Caco-2 (cell line): ENCODE measurements at regions of chr2 and their contacts with region 1.

Region 1: GRCh38 chr2:17470855-17471641 is 47.2 kb downstream of the RAD51AP2 start:
- DNase-seq: peak in 1 of 2 experiments; percentile 20
- H3K4me3 ChIP-seq: no peak overlapping the region
- H3K4me3 Mint-ChIP-seq: no peak overlapping the region
- H3K27ac Mint-ChIP-seq: no peak overlapping the region
- H3K4me1 ChIP-seq: no peaks in the 10 kb centered on the region
- H3K4me1 Mint-ChIP-seq: no peaks in the 10 kb centered on the region
- H3K27me3 ChIP-seq: no peaks in the 10 kb centered on the region
- H3K27me3 Mint-ChIP-seq: no peaks in the 10 kb centered on the region
- CTCF ChIP-seq: peak; percentile 33 to 57

Region 2: DNA sequence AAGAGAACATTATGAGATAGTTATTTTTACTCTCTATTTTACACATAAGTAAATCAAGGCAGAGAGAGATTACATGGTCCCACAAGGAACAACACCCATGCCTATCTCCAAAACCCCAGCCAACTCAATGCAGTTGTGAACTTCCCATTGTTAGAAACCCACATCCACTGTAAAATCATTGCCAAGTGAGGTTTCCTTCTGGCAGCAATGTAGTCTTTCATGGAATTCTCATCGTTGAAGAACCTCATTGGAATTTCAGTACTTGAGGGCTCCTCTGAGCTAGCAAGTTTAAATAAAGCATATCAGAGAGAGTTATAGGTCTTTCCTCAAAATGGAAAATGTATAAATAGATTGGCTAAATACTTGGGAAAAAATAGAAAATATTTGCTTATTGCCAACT is 58.0 kb before region 1 on chr2:
- CTCF ChIA-PET with region 1: no interaction called
- POLR2A ChIA-PET with region 1: no interaction called
- intact Hi-C with region 1: no loop called
- DNase-seq: no peak
- H3K4me3 ChIP-seq: no peak overlapping the region
- H3K4me3 Mint-ChIP-seq: no peak overlapping the region
- H3K27ac Mint-ChIP-seq: no peak overlapping the region
- H3K4me1 ChIP-seq: no peaks in the 10 kb centered on the region
- H3K4me1 Mint-ChIP-seq: no peaks in the 10 kb centered on the region
- H3K27me3 ChIP-seq: no peaks in the 10 kb centered on the region
- H3K27me3 Mint-ChIP-seq: peaks cover 6% of the 10 kb centered on the region
- CTCF ChIP-seq: no peak

Region 3: GRCh38 chr2:17557596-17557995 is 86.5 kb after region 1 on chr2:
- CTCF ChIA-PET with region 1: no interaction called
- POLR2A ChIA-PET with region 1: no interaction called
- intact Hi-C with region 1: loop called (anchors 1 kb)
- DNase-seq: no peak
- H3K4me3 ChIP-seq: no peak overlapping the region
- H3K4me3 Mint-ChIP-seq: no peak overlapping the region
- H3K27ac Mint-ChIP-seq: no peak overlapping the region
- H3K4me1 ChIP-seq: no peaks in the 10 kb centered on the region
- H3K4me1 Mint-ChIP-seq: no peaks in the 10 kb centered on the region
- H3K27me3 ChIP-seq: no peaks in the 10 kb centered on the region
- H3K27me3 Mint-ChIP-seq: no peaks in the 10 kb centered on the region
- CTCF ChIP-seq: no peak

Region 4: GRCh38 chr2:17573085-17573803 is 102.2 kb after region 1 on chr2:
- CTCF ChIA-PET with region 1: no interaction called
- POLR2A ChIA-PET with region 1: no interaction called
- intact Hi-C with region 1: loop called (anchors 1 kb)
- DNase-seq: no peak
- H3K4me3 ChIP-seq: no peak overlapping the region
- H3K4me3 Mint-ChIP-seq: no peak overlapping the region
- H3K27ac Mint-ChIP-seq: no peak overlapping the region
- H3K4me1 ChIP-seq: no peaks in the 10 kb centered on the region
- H3K4me1 Mint-ChIP-seq: no peaks in the 10 kb centered on the region
- H3K27me3 ChIP-seq: no peaks in the 10 kb centered on the region
- H3K27me3 Mint-ChIP-seq: peaks cover 12% of the 10 kb centered on the region
- CTCF ChIP-seq: no peak

Region 5: GRCh38 chr2:17610521-17610920 is 139.5 kb after region 1 on chr2:
- CTCF ChIA-PET with region 1: no interaction called
- POLR2A ChIA-PET with region 1: no interaction called
- intact Hi-C with region 1: no loop called
- DNase-seq: no peak
- H3K4me3 ChIP-seq: no peak overlapping the region
- H3K4me3 Mint-ChIP-seq: no peak overlapping the region
- H3K27ac Mint-ChIP-seq: no peak overlapping the region
- H3K4me1 ChIP-seq: no peaks in the 10 kb centered on the region
- H3K4me1 Mint-ChIP-seq: no peaks in the 10 kb centered on the region
- H3K27me3 ChIP-seq: no peaks in the 10 kb centered on the region
- H3K27me3 Mint-ChIP-seq: no peaks in the 10 kb centered on the region
- CTCF ChIP-seq: no peak

Region 6: DNA sequence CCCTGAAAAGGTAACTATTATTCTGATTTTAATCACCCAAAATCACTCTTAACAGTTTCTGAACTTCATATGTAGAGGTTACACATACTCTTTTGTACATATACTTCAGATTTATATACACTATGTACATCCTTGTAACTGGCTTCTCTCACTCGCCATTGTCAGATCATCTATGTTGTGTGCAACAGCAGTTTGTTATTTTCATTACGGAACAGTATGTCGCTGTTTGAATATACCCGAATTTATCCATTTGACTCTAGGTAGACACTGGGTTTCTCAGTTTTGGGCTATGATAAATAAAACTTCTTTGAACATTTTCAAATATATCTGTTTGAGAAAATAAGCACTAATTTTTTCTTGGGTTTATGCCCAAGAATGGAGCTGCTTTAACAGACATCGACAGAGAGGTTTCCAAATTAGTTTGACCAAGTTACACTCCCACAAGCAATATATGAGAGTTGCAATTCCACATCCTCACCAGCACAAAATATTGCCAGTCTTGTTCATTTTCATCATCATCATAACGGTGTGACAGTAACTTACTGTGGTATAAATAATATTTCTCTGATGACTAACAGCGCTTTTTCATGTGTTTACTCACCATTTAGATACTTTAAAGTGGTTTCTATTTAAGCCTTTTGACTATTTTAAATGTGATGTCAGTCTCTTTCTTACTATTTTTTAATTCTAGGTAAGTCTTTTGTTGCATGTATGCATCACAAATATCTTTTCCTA is 201.7 kb after region 1 on chr2:
- CTCF ChIA-PET with region 1: interaction called, 13 read pairs
- POLR2A ChIA-PET with region 1: no interaction called
- intact Hi-C with region 1: loop called (anchors 1 kb)
- DNase-seq: no peak
- H3K4me3 ChIP-seq: no peak overlapping the region
- H3K4me3 Mint-ChIP-seq: no peak overlapping the region
- H3K27ac Mint-ChIP-seq: no peak overlapping the region
- H3K4me1 ChIP-seq: no peaks in the 10 kb centered on the region
- H3K4me1 Mint-ChIP-seq: no peaks in the 10 kb centered on the region
- H3K27me3 ChIP-seq: no peaks in the 10 kb centered on the region
- H3K27me3 Mint-ChIP-seq: no peaks in the 10 kb centered on the region
- CTCF ChIP-seq: no peak